Psoas muscle (tissue), 8 donors: ENCODE measurements at regions of chr21 and their contacts with region 1.

Region 1: GRCh38 chr21:15592271-15592860 is 137.4 kb upstream of the USP25 start:
- DNase-seq: no peak
- ATAC-seq: peak in 2 of 4 donors; percentile 58 to 78
- H3K4me3 ChIP-seq: no peak overlapping the region
- H3K27ac ChIP-seq: no peak overlapping the region
- H3K4me1 ChIP-seq: no peaks in the 10 kb centered on the region
- H3K27me3 ChIP-seq: no peaks in the 10 kb centered on the region
- CTCF ChIP-seq: peak; percentile 65

Region 2: GRCh38 chr21:14251336-14251735 is 1341.0 kb before region 1 on chr21:
- intact Hi-C with region 1: loop called (anchors 1 to 5 kb)
- DNase-seq: no peak
- ATAC-seq: no peak
- H3K4me3 ChIP-seq: no peak overlapping the region
- H3K27ac ChIP-seq: no peak overlapping the region
- H3K4me1 ChIP-seq: no peaks in the 10 kb centered on the region
- H3K27me3 ChIP-seq: no peaks in the 10 kb centered on the region
- CTCF ChIP-seq: no peak

Region 3: DNA sequence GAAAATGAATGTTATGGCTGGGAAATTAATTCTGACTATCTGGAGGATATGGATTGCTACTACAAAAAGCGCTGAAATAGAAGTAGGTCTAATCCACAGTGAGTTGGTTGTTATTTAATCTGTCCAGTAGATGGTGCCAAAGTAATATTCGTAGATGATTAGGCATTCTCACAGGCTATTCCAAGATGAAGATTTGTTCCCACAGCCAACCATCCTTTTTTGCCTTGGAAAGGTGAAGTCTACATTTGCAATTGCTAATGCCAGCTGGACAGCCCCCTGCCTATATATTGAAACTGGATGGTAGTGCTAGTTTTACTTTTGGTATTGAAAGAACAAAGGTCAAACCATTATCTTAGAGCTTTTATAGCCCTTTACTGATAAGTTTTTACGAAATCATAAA is 1332.6 kb before region 1 on chr21:
- intact Hi-C with region 1: loop called in 1 of 2 experiments (anchors 5 kb)
- DNase-seq: no peak
- ATAC-seq: peak; percentile 62 to 86 (median 66)
- H3K4me3 ChIP-seq: no peak overlapping the region
- H3K27ac ChIP-seq: no peak overlapping the region
- H3K4me1 ChIP-seq: no peaks in the 10 kb centered on the region
- H3K27me3 ChIP-seq: no peaks in the 10 kb centered on the region
- CTCF ChIP-seq: peak; percentile 67

Region 4: GRCh38 chr21:14403681-14404318 is 1188.6 kb before region 1 on chr21:
- intact Hi-C with region 1: loop called in 1 of 2 experiments (anchors 5 kb)
- DNase-seq: no peak
- ATAC-seq: peak in 1 of 4 donors; percentile 61
- H3K4me3 ChIP-seq: no peak overlapping the region
- H3K27ac ChIP-seq: no peak overlapping the region
- H3K4me1 ChIP-seq: no peaks in the 10 kb centered on the region
- H3K27me3 ChIP-seq: no peaks in the 10 kb centered on the region
- CTCF ChIP-seq: peak; percentile 54

Region 5: GRCh38 chr21:14864211-14865021 is 728.0 kb before region 1 on chr21:
- intact Hi-C with region 1: loop called in 1 of 2 experiments (anchors 10 kb)
- DNase-seq: peak; percentile 70 to 77
- ATAC-seq: peak; percentile 93 to 96 (median 94)
- H3K4me3 ChIP-seq: no peak overlapping the region
- H3K27ac ChIP-seq: peak overlapping the region; percentile 44
- H3K4me1 ChIP-seq: peaks cover 9% of the 10 kb centered on the region
- H3K27me3 ChIP-seq: no peaks in the 10 kb centered on the region
- CTCF ChIP-seq: peak; percentile 66

Region 6: GRCh38 chr21:15514073-15514946 is 78.1 kb before region 1 on chr21:
- intact Hi-C with region 1: no loop called
- DNase-seq: no peak
- ATAC-seq: no peak
- H3K4me3 ChIP-seq: no peak overlapping the region
- H3K27ac ChIP-seq: no peak overlapping the region
- H3K4me1 ChIP-seq: no peaks in the 10 kb centered on the region
- H3K27me3 ChIP-seq: no peaks in the 10 kb centered on the region
- CTCF ChIP-seq: no peak